ENCODE measurements at regions of chr21 and their contacts with region 1.

Region 1: GRCh38 chr21:35051287-35051818 is 2.3 kb upstream of the RUNX1 start:
- DNase-seq: peak; percentile 77 to 83
- ATAC-seq: peak; percentile 85 to 96 (median 90)
- H3K4me3 ChIP-seq: no peak overlapping the region
- H3K27ac ChIP-seq: peak overlapping the region in 5 of 10 donors; percentile 16 to 73 (median 49)
- H3K4me1 ChIP-seq: peaks cover 3 to 48% (median 10%) of the 10 kb centered on the region in 9 donors
- H3K27me3 ChIP-seq: peaks cover 0 to 21% (median 7%) of the 10 kb centered on the region in 7 donors
- CTCF ChIP-seq: peak; percentile 19 to 74 (median 68)

Region 2: GRCh38 chr21:35390013-35390776 is 338.8 kb after region 1 on chr21:
- intact Hi-C with region 1: loop called in 3 of 10 experiments (anchors 5 to 10 kb)
- DNase-seq: no peak
- ATAC-seq: no peak
- H3K4me3 ChIP-seq: no peak overlapping the region
- H3K27ac ChIP-seq: no peak overlapping the region
- H3K4me1 ChIP-seq: peaks cover 0 to 3% (median 0%) of the 10 kb centered on the region in 9 donors
- H3K27me3 ChIP-seq: peaks cover 0 to 4% (median 0%) of the 10 kb centered on the region in 7 donors
- CTCF ChIP-seq: no peak

Region 3: DNA sequence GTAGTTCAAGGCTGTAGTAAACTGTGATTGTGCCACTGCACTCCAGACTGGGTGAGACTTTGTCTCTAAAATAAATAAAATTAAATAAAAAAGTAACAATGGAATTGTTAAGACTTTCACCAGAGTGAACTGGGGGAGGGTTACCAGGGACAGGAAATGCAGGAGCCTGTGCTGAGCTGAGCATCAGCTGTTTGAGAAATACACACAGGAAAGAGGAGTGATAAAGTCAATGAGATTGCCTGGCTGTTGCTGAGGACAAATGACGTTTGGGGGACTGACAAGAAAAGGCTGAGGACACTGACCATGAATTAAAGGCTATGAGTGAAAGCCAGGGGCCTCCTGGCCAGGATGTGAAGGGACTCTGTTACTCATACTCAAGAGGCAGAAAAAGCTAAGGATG is 782.6 kb after region 1 on chr21:
- intact Hi-C with region 1: loop called in 1 of 10 experiments (anchors 10 kb)
- DNase-seq: no peak
- ATAC-seq: peak in 4 of 8 donors; percentile 33 to 68 (median 58)
- H3K4me3 ChIP-seq: no peak overlapping the region
- H3K27ac ChIP-seq: peak overlapping the region in 2 of 10 donors; percentile 7 to 58
- H3K4me1 ChIP-seq: peaks cover 0 to 5% (median 0%) of the 10 kb centered on the region in 9 donors
- H3K27me3 ChIP-seq: peaks cover 0 to 18% (median 6%) of the 10 kb centered on the region in 7 donors
- CTCF ChIP-seq: no peak

Region 4: GRCh38 chr21:35850029-35850428 is 798.7 kb after region 1 on chr21:
- intact Hi-C with region 1: loop called in 2 of 10 experiments (anchors 10 kb)
- DNase-seq: no peak
- ATAC-seq: peak in 6 of 8 donors; percentile 60 to 76 (median 72)
- H3K4me3 ChIP-seq: peak overlapping the region in 1 of 10 donors; percentile 28
- H3K27ac ChIP-seq: peak overlapping the region in 8 of 10 donors; percentile 46 to 87 (median 65)
- H3K4me1 ChIP-seq: peaks cover 0 to 35% (median 18%) of the 10 kb centered on the region in 9 donors
- H3K27me3 ChIP-seq: peaks cover 0 to 5% (median 0%) of the 10 kb centered on the region in 7 donors
- CTCF ChIP-seq: no peak

Region 5: GRCh38 chr21:36028127-36029069 is 977.0 kb after region 1 on chr21:
- intact Hi-C with region 1: loop called in 1 of 10 experiments (anchors 5 kb)
- DNase-seq: peak; percentile 57 to 63
- ATAC-seq: peak; percentile 75 to 96 (median 88)
- H3K4me3 ChIP-seq: no peak overlapping the region
- H3K27ac ChIP-seq: no peak overlapping the region
- H3K4me1 ChIP-seq: peaks cover 0 to 8% (median 0%) of the 10 kb centered on the region in 9 donors
- H3K27me3 ChIP-seq: no peaks in the 10 kb centered on the region
- CTCF ChIP-seq: peak; percentile 91 to 97 (median 95)